K562 (cell line): ENCODE measurements at regions of chr1 and their contacts with region 1.

Region 1: DNA sequence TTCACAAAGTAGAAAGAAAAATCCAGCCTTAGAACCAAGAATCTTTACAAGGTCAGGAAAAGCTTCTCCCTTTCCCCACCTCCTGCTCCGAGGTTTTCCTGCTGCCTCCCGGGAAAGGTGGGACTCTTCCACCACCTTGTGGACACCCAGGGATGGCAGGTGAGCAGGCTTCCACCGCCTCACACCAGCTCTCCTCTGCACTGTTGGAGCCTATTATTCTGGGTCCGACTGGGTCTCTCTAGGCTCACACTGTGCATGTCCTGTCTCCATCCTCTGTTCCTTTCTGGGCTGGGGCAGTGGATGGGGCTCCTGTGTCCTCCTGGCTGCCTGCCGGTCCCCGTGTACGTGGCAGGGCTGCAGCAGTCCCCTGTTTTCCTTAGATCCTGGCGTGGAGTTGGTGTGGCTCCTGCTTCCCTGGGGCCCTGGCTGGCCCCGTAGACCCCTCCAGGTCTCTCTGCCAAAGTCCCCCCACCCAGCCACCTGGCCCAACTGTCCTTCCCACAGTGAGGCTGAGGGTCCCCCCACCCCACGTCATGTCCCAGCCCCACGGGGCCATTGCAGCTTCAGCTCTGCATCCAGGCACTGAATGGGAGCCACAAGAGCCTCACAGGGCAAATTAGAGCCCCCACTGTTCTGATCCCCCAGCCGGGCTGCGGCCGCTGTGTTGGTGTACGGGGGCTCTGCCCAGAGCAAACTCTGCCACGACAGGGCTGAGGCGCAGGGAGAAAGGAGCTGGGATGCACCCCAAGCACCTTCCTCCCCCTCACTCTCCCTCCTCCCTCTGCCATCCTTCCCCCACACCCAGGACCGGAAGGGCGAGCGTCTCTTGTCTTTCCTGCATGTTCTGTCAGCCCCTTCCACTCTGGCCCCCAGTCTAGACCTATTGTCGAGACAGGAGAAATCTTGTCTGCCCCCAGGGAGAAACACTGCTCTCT is 3.3 kb upstream of the SLC45A1 start:
- DNase-seq: peak; percentile 75 to 84 (median 78)
- ATAC-seq: peak; percentile 90
- H3K4me3 ChIP-seq: no peak overlapping the region
- H3K27ac ChIP-seq: no peak overlapping the region
- H3K4me1 ChIP-seq: peaks cover 0 to 21% of the 10 kb centered on the region in 2 experiments; a peak in 3 of 5 replicates
- H3K27me3 ChIP-seq: peaks cover 31 to 81% of the 10 kb centered on the region in 2 experiments
- CTCF ChIP-seq: peak; percentile 90 to 97 (median 96)
- EP300 ChIP-seq: peak; percentile 27; the same call in 1 of the 2 replicates
- POLR2A ChIP-seq: no peak
- RAD21 ChIP-seq: peak; percentile 96 to 99

Region 2: GRCh38 chr1:7667625-7668218 is 646.9 kb before region 1 on chr1:
- CTCF ChIA-PET with region 1: interaction called, 11 read pairs
- POLR2A ChIA-PET with region 1: no interaction called
- in situ Hi-C with region 1: loop called (anchors 25 kb)
- intact Hi-C with region 1: no loop called
- DNase-seq: peak; percentile 82 to 85 (median 84)
- ATAC-seq: peak; percentile 85
- H3K4me3 ChIP-seq: no peak overlapping the region
- H3K27ac ChIP-seq: no peak overlapping the region
- H3K4me1 ChIP-seq: peaks cover 0 to 35% of the 10 kb centered on the region in 2 experiments; a peak in 2 of 5 replicates
- H3K27me3 ChIP-seq: peaks cover 27 to 58% of the 10 kb centered on the region in 2 experiments; a peak in 4 of 5 replicates
- CTCF ChIP-seq: peak; percentile 99
- EP300 ChIP-seq: no peak
- POLR2A ChIP-seq: no peak
- RAD21 ChIP-seq: peak; percentile 94 to 98

Region 3: DNA sequence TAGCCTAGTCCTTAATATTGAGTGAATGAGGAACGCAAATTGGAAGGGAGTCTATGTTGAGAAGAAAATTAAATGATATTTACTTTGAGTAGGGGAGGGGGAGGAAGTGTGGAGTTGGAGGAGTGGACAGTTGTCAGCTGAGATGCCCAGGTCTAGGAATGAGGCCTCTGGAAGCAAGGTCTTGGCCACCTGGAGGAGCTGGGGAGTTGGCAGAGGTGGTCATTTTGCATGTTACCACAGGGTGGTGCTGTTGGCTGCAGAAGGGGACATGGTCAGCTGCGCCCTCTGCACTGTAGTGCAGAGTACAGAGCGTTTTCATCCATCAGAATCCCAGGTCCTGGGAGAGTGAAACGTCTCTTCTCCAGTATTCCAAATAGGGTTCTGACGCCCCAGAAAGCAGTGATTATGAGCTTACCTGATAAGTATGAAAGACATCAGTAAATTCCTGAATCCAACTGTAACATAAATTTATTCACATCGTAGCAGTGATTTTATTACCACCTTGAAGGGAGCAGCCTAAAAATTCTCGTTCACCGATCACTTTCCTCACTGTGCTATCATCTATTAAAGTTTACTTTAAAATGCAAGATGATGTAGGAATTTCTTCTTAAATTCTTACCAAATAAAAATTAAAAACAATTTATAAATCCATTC is 339.3 kb before region 1 on chr1:
- CTCF ChIA-PET with region 1: interaction called, 23 read pairs
- POLR2A ChIA-PET with region 1: interaction called, 3 read pairs
- in situ Hi-C with region 1: no loop called
- intact Hi-C with region 1: no loop called
- DNase-seq: peak; percentile 83 to 87 (median 86)
- ATAC-seq: peak; percentile 100
- H3K4me3 ChIP-seq: no peak overlapping the region
- H3K27ac ChIP-seq: no peak overlapping the region
- H3K4me1 ChIP-seq: no peaks in the 10 kb centered on the region
- H3K27me3 ChIP-seq: no peaks in the 10 kb centered on the region
- CTCF ChIP-seq: peak; percentile 98 to 100 (median 99)
- EP300 ChIP-seq: no peak
- POLR2A ChIP-seq: no peak
- RAD21 ChIP-seq: peak; percentile 79 to 89

Region 4: DNA sequence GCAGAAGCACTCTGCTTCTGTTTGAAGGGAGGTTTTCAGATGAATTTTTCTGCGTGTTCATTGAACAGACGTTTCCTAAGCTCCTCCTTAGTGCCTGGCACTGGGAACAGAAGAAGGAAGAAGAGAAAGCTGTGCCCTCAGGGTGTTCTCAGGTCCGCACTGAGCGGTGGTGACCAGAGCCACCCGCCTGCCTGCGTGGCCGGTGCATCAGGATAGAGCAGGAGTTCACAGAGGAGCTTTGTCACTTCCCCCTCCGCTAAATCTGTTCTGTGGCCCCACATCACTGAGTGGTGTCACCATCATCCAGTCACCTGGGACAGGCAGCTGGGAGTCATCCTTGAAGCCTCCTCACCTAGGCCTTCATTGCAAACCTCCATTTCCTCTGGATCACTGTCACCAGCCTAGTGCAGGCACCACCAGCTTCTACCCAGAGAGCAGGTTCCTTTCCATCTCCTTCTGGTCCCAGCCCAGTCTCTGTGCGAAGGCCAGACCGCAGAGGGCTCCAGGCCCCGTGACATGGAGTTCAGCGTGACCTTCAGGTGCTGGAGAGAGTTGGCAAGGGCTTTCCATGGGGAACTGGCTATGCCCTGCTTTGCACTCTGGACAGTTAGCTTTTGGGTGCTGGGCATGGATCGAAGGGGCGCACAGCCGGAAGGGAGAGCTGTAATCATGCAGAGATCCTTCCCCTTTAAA is 331.4 kb before region 1 on chr1:
- CTCF ChIA-PET with region 1: interaction called, 19 read pairs
- POLR2A ChIA-PET with region 1: no interaction called
- in situ Hi-C with region 1: no loop called
- intact Hi-C with region 1: loop called (anchors 1 kb)
- DNase-seq: no peak
- ATAC-seq: no peak
- H3K4me3 ChIP-seq: no peak overlapping the region
- H3K27ac ChIP-seq: no peak overlapping the region
- H3K4me1 ChIP-seq: no peaks in the 10 kb centered on the region; a peak in 1 of 5 replicates
- H3K27me3 ChIP-seq: no peaks in the 10 kb centered on the region
- CTCF ChIP-seq: no peak
- EP300 ChIP-seq: no peak
- POLR2A ChIP-seq: no peak
- RAD21 ChIP-seq: no peak

Region 5: GRCh38 chr1:8015036-8015808 is 299.4 kb before region 1 on chr1:
- CTCF ChIA-PET with region 1: interaction called, 26 read pairs
- POLR2A ChIA-PET with region 1: interaction called, 5 read pairs
- in situ Hi-C with region 1: loop called (anchors 5 kb)
- intact Hi-C with region 1: no loop called
- DNase-seq: peak; percentile 62 to 79 (median 64)
- ATAC-seq: peak; percentile 93
- H3K4me3 ChIP-seq: no peak overlapping the region
- H3K27ac ChIP-seq: no peak overlapping the region
- H3K4me1 ChIP-seq: peaks cover 0 to 7% of the 10 kb centered on the region in 2 experiments; a peak in 1 of 5 replicates
- H3K27me3 ChIP-seq: peaks cover 0 to 2% of the 10 kb centered on the region in 2 experiments; a peak in 2 of 5 replicates
- CTCF ChIP-seq: peak; percentile 77 to 93 (median 85)
- EP300 ChIP-seq: no peak
- POLR2A ChIP-seq: no peak
- RAD21 ChIP-seq: peak; percentile 84 to 97

Region 6: DNA sequence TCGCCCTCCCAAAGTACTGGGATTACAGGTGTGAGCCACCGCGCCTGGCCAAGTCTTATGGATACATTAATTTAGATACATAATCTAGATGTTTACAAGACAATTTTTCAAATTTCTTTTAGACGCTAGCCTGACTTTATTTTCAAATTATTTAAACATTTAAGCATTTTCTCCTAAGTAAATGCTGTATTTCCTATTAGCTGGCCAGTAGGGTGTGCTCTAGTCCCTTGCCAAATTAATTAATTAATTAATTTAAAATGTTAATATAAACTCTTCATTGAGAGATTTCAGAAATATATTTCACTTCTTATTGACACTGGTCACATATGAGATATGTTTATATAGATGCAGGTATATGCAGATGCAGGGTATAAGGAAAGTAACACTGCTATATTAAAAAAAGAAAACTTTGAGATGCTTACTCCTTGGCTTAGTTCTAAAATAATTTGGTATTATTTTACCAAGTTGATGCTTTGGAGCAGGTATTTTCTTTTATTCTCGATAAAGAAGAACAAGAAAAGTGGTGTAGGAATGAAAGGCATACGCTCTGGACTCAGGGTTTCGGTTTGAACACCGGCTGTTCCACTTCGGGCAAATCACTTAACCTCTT is 283.3 kb before region 1 on chr1:
- CTCF ChIA-PET with region 1: interaction called, 33 read pairs
- POLR2A ChIA-PET with region 1: interaction called, 4 read pairs
- in situ Hi-C with region 1: no loop called
- intact Hi-C with region 1: loop called (anchors 1 kb)
- DNase-seq: peak in 2 of 4 experiments; percentile 38 to 42
- ATAC-seq: no peak
- H3K4me3 ChIP-seq: no peak overlapping the region
- H3K27ac ChIP-seq: no peak overlapping the region
- H3K4me1 ChIP-seq: peaks cover 0 to 5% of the 10 kb centered on the region in 2 experiments; a peak in 4 of 5 replicates
- H3K27me3 ChIP-seq: peaks cover 17 to 31% of the 10 kb centered on the region in 2 experiments; a peak in 4 of 5 replicates
- CTCF ChIP-seq: peak in 2 of 3 experiments; percentile 57 to 91; a peak in 4 of 6 replicates
- EP300 ChIP-seq: no peak
- POLR2A ChIP-seq: no peak
- RAD21 ChIP-seq: peak; percentile 89 to 94

Region 7: GRCh38 chr1:8142955-8143629 is 171.5 kb before region 1 on chr1:
- CTCF ChIA-PET with region 1: no interaction called
- POLR2A ChIA-PET with region 1: no interaction called
- in situ Hi-C with region 1: no loop called
- intact Hi-C with region 1: loop called (anchors 10 kb)
- DNase-seq: no peak
- ATAC-seq: peak; percentile 46; the same call in 1 of the 3 replicates
- H3K4me3 ChIP-seq: no peak overlapping the region
- H3K27ac ChIP-seq: no peak overlapping the region
- H3K4me1 ChIP-seq: no peaks in the 10 kb centered on the region
- H3K27me3 ChIP-seq: peaks cover 54 to 55% of the 10 kb centered on the region in 2 experiments
- CTCF ChIP-seq: no peak
- EP300 ChIP-seq: no peak
- POLR2A ChIP-seq: no peak
- RAD21 ChIP-seq: no peak